ENCODE measurements at regions of chr2 and their contacts with region 1.

Region 1: DNA sequence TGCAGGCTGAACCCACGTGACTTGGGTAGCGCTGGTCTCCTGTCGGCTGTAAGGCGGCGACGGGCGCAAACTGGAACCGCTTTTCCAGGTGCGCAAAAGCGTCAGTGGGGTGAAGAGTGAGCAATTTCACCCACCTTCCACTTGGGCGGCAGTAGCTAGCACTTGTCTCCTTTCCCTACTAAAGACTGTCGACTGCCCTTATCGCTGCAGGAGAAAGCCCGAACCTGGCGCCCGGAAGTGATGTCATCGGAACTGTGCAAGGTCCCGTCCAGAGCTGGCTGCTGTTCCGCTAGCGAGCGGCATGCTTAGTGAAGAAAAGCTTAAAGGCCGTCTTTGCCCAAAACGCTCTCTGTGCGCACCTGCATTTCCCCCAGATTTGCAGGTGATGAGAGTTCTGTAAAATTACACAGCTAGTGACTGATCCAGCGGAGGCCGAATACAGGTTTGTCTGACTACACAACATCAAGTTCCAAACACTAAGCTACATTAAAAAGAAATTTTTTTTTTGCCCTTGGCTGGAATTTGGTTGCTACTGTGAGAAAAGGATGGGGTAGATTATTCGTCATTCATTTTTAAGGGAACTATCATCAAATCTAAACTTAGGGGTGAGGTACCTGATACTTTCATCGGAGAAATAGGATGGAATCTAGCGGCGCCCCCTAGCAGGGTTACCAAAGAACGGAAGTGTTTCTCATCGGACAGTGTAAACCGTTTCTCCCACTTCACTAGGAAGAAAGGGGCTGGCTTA is at the start of gene OSGEPL1:
- DNase-seq: peak; percentile 93
- H3K4me3 ChIP-seq: peak within 1 kb of the TSS; percentile 85 to 97 (median 85)
- H3K27ac ChIP-seq: peak within 1 kb of the TSS; percentile 75
- H3K4me1 ChIP-seq: peaks cover 11% of the 10 kb centered on the region
- H3K27me3 ChIP-seq: no peaks in the 10 kb centered on the region
- CTCF ChIP-seq: peak; percentile 45 to 49
- POLR2A ChIP-seq: peak; percentile 53
- total RNA-seq, gene OSGEPL1: 5.4 and 5.9 TPM in 2 replicates

Region 2: GRCh38 chr2:189751080-189751658 is 11.6 kb before region 1 on chr2:
- CTCF ChIA-PET with region 1: interaction called, 32 read pairs
- POLR2A ChIA-PET with region 1: no interaction called
- dilution Hi-C with region 1: no loop called
- intact Hi-C with region 1: no loop called
- DNase-seq: peak; percentile 40
- H3K4me3 ChIP-seq: no peak overlapping the region
- H3K27ac ChIP-seq: no peak overlapping the region
- H3K4me1 ChIP-seq: no peaks in the 10 kb centered on the region
- H3K27me3 ChIP-seq: no peaks in the 10 kb centered on the region
- CTCF ChIP-seq: peak; percentile 52 to 59
- POLR2A ChIP-seq: no peak

Region 3: DNA sequence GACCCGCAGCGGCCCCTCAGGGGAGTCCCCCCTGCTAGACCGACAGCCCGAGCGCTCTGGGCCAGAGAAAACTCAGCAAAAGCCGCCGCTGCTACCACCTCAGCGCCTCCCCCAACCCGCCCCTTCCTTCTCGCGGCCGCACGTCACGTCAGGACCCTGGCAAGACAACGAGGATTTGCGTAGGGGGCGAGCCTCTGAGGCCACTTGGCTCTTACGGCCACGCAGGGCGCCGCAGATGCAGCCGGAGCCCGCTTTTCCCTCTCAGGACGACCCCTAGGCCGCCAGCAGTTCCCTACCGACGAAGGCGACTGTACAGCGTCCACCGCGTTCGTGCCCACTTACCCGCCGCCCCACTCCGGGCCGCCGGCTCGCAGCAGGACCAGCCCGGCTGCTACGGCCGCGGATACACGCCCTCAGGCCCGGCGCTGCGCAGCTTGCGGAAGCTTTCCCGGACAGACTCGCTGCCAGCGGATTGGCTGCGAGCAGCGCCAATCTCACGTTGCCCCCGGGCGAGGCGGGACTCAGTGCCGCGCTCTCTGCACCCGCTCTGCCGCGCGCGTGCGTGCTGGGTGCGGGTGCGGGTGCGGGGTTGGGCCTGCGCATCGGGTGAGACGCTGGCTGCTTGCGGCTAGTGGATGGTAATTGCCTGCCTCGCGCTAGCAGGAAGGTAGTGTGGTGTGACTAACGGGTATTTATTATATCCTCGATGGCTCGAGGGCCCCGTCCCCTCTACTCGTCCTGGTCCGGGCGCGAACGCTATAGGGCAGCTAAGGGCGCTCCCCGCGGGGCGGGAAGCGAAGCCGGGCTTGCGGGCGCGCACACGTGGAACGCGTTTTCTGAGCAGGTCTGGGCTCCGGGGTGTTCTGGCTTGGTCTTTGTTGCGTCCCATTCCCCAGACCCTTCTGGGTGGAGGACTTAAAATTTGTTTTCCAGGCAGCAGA is 21.5 kb after region 1 on chr2 and contains the starts of genes ORMDL1 and PMS1:
- CTCF ChIA-PET with region 1: interaction called, 5 read pairs
- POLR2A ChIA-PET with region 1: no interaction called
- dilution Hi-C with region 1: no loop called
- intact Hi-C with region 1: loop called (anchors 1 kb)
- DNase-seq: peak; percentile 98
- H3K4me3 ChIP-seq: peak within 1 kb of the TSS; percentile 73 to 95 (median 87)
- H3K27ac ChIP-seq: peak within 1 kb of the TSS; percentile 71
- H3K4me1 ChIP-seq: peaks cover 16% of the 10 kb centered on the region
- H3K27me3 ChIP-seq: no peaks in the 10 kb centered on the region
- CTCF ChIP-seq: no peak
- POLR2A ChIP-seq: peak; percentile 92
- total RNA-seq, gene ORMDL1: 58.0 and 63.3 TPM in 2 replicates
- total RNA-seq, gene PMS1: 27.8 and 28.4 TPM in 2 replicates